Posterior cingulate gyrus (tissue), 11 donors: ENCODE measurements at regions of chr1 and their contacts with region 1.

Region 1: DNA sequence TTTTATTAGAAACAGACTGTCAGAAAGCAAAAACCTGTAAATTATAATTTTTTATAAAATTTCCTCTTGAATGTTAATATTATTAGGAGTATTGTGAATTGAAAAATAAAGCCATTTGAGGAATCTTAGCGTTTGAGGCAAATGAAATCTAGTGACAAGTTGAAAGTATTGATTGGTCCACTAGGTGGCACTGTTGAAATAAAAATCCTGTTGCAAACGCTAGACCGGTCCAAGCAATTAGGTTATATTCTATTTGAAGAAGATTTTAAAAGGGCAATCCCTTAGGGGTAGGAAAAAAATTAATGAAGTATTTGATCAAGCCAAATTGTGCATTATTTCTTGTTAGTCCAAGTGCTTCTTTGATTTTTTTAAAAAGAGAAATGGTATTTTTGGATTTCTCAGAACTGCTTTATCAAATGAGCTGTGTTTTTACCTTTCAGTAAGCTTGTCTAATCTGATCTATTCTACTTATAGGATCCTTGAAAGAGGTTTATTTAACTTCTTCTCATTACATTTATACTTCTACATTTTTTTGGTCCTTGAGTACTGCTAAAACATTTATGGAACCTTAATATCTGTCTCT is 57.7 kb downstream of the ATG4C start:
- DNase-seq: no peak

Region 2: DNA sequence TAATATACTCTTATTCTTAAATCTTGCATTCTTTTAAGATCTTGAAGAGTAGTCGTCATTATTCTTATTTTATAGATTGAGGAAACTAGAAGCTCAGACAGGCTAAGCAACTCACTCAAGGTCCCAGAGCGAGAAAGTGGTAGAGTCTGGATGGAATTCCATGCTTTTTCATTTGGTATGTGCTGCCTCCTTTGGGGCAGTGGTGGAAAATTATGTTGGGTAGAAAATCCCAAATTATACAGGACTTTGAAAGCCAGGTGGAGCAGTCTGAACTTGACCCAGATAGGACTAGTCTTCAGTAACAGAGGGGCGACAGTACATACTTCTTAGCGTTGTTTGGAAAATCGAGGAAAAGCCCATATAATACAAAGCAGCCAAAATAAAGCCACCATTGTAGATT is 147.8 kb after region 1 on chr1:
- intact Hi-C with region 1: loop called (anchors 10 kb)
- DNase-seq: no peak

Region 3: DNA sequence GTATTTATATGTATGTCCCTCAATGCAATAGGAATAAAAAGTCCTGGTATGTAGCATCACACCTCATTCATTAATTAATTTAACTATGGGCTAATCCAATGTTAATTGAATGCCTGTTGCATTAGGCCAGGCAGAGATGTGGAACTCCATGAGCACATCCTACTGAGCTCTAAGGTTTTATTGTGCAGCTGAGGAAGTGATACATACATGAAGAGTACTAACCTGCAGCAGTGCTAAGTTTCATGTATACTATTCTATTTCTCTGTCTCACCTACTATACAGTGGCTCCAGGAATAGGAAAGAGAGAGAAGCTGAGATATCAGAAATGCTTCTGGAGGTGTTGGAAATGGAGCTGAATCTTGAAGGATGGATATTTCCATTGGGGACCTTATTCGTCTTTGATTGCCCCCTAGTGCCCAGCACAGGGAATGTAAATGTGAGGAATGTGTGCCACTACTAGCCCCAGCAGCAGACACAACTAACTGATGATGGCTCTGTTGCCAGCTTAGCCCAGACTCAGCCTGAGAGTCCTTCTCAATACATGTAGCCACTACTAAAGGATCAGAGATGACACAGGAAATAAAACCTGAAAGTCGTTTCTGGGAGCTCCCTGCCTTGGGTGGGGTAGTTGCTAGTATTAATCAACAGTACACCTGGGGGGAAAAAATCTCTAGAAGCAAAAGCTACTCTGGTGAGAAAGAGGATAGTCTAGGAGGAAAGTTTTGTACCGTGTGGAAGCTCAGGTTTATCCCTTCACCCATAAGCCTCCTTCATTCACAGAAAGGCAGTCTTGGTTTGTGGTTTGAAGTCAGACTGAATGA is 307.4 kb after region 1 on chr1:
- intact Hi-C with region 1: loop called (anchors 10 kb)
- DNase-seq: peak in 5 of 10 donors; percentile 17 to 64 (median 35)